CD14-positive monocyte (primary cell): ENCODE measurements at regions of chr19 and their contacts with region 1.

Region 1: DNA sequence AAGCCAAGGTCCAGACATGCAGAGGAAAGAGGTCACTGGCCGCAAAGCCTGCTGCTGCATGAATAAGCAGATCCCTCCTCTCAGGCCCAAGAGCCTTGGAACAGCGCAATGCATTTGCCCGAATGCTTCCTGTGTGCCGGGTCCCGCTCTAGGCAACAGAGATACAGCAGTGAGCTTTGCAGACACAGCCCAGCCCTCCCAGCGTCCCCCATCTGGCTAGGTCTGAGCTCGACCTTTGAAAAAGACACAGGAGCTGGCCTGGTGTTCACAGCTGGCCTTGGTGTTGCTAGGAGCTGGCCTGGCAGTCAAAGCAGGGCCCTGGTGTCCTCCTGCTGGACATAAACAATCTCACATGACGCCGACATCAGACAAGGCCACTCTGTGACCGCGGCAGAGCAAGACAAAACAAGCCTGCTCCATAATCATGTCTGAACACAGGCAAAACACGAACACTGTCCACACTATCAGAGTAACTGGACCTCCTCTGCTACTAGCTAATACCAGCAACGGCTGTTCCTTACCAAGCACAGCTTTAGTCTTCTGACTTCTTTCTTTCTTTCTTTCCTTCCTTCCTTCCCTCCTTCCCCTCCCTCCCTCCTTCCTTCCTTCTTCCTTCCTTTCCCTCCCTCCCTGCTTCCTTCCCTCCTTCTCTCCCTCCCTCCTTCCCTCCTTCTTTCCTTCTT is 5.7 kb upstream of the PEX11G start:
- DNase-seq: no peak
- H3K4me3 ChIP-seq: no peak overlapping the region
- H3K4me3 Mint-ChIP-seq: peak overlapping the region in 1 of 2 donors; percentile 15
- H3K27ac ChIP-seq: no peak overlapping the region
- H3K27ac Mint-ChIP-seq: peak overlapping the region in 5 of 7 donors; percentile 26 to 75 (median 50)
- H3K4me1 ChIP-seq: peaks cover 54 to 66% of the 10 kb centered on the region in 2 donors
- H3K4me1 Mint-ChIP-seq: peaks cover 65% of the 10 kb centered on the region
- H3K27me3 ChIP-seq: no peaks in the 10 kb centered on the region
- H3K27me3 Mint-ChIP-seq: peaks cover 8 to 10% (median 9%) of the 10 kb centered on the region in 3 donors
- CTCF ChIP-seq: no peak

Region 2: DNA sequence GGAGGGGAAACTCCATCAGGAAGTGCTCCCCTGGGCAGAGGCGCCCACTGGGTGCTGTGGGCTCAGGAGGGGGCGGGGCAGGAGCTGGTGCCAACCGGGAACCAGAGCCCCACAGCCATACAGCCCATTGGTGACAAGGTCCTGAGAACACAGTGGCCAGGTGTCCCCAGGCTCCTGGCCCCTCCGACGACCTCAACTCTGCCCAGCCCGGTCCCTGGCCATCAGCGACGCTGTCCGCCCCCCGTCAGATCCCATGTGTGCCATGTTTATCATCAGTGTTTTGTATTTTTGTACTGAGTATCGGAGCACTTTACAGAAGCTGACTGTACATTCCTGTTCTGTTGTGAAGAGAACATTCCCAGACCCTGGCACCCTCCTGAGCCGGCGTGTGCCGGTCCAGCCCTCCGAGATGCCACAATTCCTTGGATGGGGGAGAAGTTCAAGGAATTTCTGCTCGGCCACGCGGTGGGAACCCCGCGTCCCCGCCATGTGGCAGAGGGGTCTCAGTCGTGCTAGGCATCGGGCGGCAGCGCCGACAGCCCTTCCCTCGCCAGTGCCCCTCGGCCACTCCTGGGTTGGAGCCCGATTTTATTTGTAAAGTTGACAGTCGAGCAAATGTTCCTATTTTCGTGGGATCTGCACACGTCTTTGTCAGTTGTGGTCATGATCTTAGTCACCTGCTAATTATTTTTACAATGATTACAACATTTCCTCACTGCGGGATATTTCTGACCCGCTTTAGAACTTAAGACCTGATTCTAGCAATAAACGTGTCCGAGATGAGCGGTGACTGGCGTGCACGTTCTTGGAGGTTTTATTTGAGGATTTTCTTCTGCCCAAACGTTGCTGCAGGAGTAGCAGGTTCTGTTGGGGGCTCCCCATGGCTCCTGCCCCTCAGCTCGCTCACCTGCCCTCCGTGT is 22.6 kb before region 1 on chr19:
- intact Hi-C with region 1: loop called in 1 of 2 experiments (anchors 2 kb)
- DNase-seq: peak; percentile 63 to 75 (median 70)
- H3K4me3 ChIP-seq: no peak overlapping the region
- H3K4me3 Mint-ChIP-seq: no peak overlapping the region
- H3K27ac ChIP-seq: peak overlapping the region; percentile 61 to 67
- H3K27ac Mint-ChIP-seq: peak overlapping the region; percentile 72 to 94 (median 90)
- H3K4me1 ChIP-seq: peaks cover 24 to 27% of the 10 kb centered on the region in 2 donors
- H3K4me1 Mint-ChIP-seq: peaks cover 18% of the 10 kb centered on the region
- H3K27me3 ChIP-seq: no peaks in the 10 kb centered on the region
- H3K27me3 Mint-ChIP-seq: peaks cover 0 to 2% (median 1%) of the 10 kb centered on the region in 3 donors
- CTCF ChIP-seq: no peak

Region 3: GRCh38 chr19:7482584-7483439 is 11.7 kb before region 1 on chr19:
- intact Hi-C with region 1: loop called in 1 of 2 experiments (anchors 1 kb)
- DNase-seq: peak in 2 of 3 donors; percentile 25 to 37
- H3K4me3 ChIP-seq: no peak overlapping the region
- H3K4me3 Mint-ChIP-seq: peak overlapping the region; percentile 37 to 68
- H3K27ac ChIP-seq: no peak overlapping the region
- H3K27ac Mint-ChIP-seq: peak overlapping the region in 2 of 7 donors; percentile 39 to 75
- H3K4me1 ChIP-seq: peaks cover 21 to 29% of the 10 kb centered on the region in 2 donors
- H3K4me1 Mint-ChIP-seq: peaks cover 27% of the 10 kb centered on the region
- H3K27me3 ChIP-seq: no peaks in the 10 kb centered on the region
- H3K27me3 Mint-ChIP-seq: peaks cover 2 to 14% (median 12%) of the 10 kb centered on the region in 3 donors
- CTCF ChIP-seq: no peak

Region 4: GRCh38 chr19:7540761-7541491 is 46.4 kb after region 1 on chr19:
- intact Hi-C with region 1: loop called in 1 of 2 experiments (anchors 5 kb)
- DNase-seq: no peak
- H3K4me3 ChIP-seq: no peak overlapping the region
- H3K4me3 Mint-ChIP-seq: no peak overlapping the region
- H3K27ac ChIP-seq: no peak overlapping the region
- H3K27ac Mint-ChIP-seq: no peak overlapping the region
- H3K4me1 ChIP-seq: peaks cover 51 to 53% of the 10 kb centered on the region in 2 donors
- H3K4me1 Mint-ChIP-seq: peaks cover 57% of the 10 kb centered on the region
- H3K27me3 ChIP-seq: no peaks in the 10 kb centered on the region
- H3K27me3 Mint-ChIP-seq: no peaks in the 10 kb centered on the region
- CTCF ChIP-seq: no peak

Region 5: GRCh38 chr19:7641288-7642276 is 147.0 kb after region 1 on chr19:
- intact Hi-C with region 1: no loop called
- DNase-seq: no peak
- H3K4me3 ChIP-seq: no peak overlapping the region
- H3K4me3 Mint-ChIP-seq: no peak overlapping the region
- H3K27ac ChIP-seq: no peak overlapping the region
- H3K27ac Mint-ChIP-seq: peak overlapping the region in 2 of 7 donors; percentile 35 to 74
- H3K4me1 ChIP-seq: peaks cover 65 to 80% of the 10 kb centered on the region in 2 donors
- H3K4me1 Mint-ChIP-seq: peaks cover 67% of the 10 kb centered on the region
- H3K27me3 ChIP-seq: no peaks in the 10 kb centered on the region
- H3K27me3 Mint-ChIP-seq: peaks cover 0 to 1% (median 0%) of the 10 kb centered on the region in 3 donors
- CTCF ChIP-seq: no peak